Heart left ventricle (tissue), 16 donors: ENCODE measurements at regions of chrX and their contacts with region 1.

Region 1: GRCh38 chrX:39149761-39150160 is 348.5 kb downstream of the MID1IP1 start:
- DNase-seq: peak; percentile 47 to 83 (median 62)
- ATAC-seq: peak in 3 of 4 donors; percentile 63 to 69 (median 68)
- H3K4me3 ChIP-seq: no peak overlapping the region
- H3K27ac ChIP-seq: no peak overlapping the region
- H3K4me1 ChIP-seq: peaks cover 0 to 7% (median 0%) of the 10 kb centered on the region in 12 donors
- H3K27me3 ChIP-seq: peaks cover 0 to 25% (median 0%) of the 10 kb centered on the region in 9 donors
- CTCF ChIP-seq: peak; percentile 54 to 80 (median 62)
- POLR2A ChIP-seq: no peak

Region 2: DNA sequence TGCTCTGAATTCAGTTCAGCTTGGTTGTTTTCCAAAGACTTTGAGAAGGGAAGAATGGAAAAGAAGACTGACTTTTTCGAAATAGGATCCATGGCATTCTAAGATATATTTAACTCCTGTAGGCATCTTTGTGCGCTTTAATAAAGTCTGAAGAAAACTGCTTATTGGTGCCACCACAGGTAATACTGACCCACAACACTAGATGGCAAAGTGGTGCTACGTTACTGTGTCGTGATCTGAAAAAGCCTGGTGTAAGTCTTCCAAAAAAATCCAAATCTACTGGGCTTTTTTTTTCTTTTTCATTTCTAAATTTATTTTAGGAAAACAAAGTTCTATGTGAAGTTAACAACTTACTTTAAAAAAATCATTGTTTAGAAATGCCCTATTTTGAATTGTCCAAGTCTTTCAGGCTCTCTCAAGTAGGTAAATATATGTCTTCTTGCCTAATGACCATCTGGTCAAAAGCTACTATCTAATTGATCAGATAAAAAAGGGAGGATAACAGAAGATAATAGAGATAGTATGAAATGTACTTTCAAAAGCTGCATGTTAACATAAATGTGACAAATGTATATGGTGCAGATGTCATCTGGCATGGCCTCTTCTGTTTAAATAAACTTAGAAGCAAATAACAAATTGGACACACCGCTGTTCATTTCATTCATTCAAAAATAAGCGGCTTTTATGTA is 395.5 kb before region 1 on chrX:
- intact Hi-C with region 1: loop called in 3 of 10 experiments (anchors 5 kb)
- DNase-seq: no peak
- ATAC-seq: peak in 1 of 4 donors; percentile 63
- H3K4me3 ChIP-seq: no peak overlapping the region
- H3K27ac ChIP-seq: no peak overlapping the region
- H3K4me1 ChIP-seq: no peaks in the 10 kb centered on the region
- H3K27me3 ChIP-seq: peaks cover 0 to 21% (median 0%) of the 10 kb centered on the region in 9 donors
- CTCF ChIP-seq: peak; percentile 40 to 65 (median 55)
- POLR2A ChIP-seq: no peak

Region 3: DNA sequence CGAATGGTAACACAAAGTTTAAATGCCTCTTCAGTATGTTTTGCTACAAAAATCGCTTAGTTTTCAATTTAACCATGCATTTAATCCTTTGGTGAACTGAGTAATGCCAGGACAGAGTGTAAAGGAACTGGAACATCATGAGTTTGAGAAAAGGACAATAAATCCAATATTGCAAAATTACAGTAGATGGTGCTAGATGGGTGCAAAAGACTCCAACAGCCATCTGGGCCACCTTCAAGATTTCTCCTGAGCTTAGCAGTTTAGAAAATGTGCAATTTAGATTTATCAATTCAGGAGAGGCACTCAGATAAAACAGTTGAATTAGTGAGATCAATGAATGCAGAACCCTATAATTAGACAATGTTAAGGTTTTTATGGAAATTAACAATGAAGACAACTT is 381.7 kb before region 1 on chrX:
- intact Hi-C with region 1: loop called in 8 of 10 experiments (anchors 5 to 10 kb)
- DNase-seq: no peak
- ATAC-seq: no peak
- H3K4me3 ChIP-seq: no peak overlapping the region
- H3K27ac ChIP-seq: no peak overlapping the region
- H3K4me1 ChIP-seq: no peaks in the 10 kb centered on the region
- H3K27me3 ChIP-seq: peaks cover 0 to 10% (median 0%) of the 10 kb centered on the region in 9 donors
- CTCF ChIP-seq: peak in 11 of 12 donors; percentile 19 to 58 (median 34)
- POLR2A ChIP-seq: no peak